ENCODE measurements at regions of chr9 and their contacts with region 1.

Region 1: GRCh38 chr9:124309665-124310064 is 51.9 kb downstream of the NEK6 start:
- DNase-seq: peak; percentile 97
- H3K4me3 ChIP-seq: no peak overlapping the region
- H3K27ac ChIP-seq: peak overlapping the region; percentile 84
- H3K4me1 ChIP-seq: peaks cover 31% of the 10 kb centered on the region
- H3K27me3 ChIP-seq: no peaks in the 10 kb centered on the region
- CTCF ChIP-seq: no peak
- POLR2A ChIP-seq: no peak

Region 2: DNA sequence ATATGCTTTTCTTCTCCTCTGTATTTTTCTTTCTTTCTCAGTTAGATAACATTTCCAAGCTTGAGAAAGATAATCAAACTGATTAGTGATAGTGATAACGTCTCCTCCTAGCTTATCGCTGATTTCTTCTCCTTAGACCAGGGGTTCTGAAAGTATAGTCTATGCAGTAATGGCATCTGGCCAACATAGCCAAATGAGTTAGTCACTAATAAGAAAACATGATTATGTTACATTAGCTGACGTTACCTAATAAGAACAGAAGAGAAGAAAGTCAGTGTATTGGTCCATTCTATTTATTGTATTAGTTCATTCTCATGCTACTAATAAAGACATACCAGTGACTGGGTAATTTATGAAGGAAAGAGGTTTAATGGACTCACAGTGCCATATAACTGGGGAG is 1152.4 kb before region 1 on chr9:
- CTCF ChIA-PET with region 1: no interaction called
- POLR2A ChIA-PET with region 1: no interaction called
- dilution Hi-C with region 1: no loop called
- intact Hi-C with region 1: no loop called
- DNase-seq: peak; percentile 51
- H3K4me3 ChIP-seq: no peak overlapping the region
- H3K27ac ChIP-seq: no peak overlapping the region
- H3K4me1 ChIP-seq: peaks cover 7% of the 10 kb centered on the region
- H3K27me3 ChIP-seq: no peaks in the 10 kb centered on the region
- CTCF ChIP-seq: no peak
- POLR2A ChIP-seq: no peak

Region 3: GRCh38 chr9:124133727-124134126 is 175.9 kb before region 1 on chr9:
- CTCF ChIA-PET with region 1: interaction called, 29 read pairs
- POLR2A ChIA-PET with region 1: no interaction called
- dilution Hi-C with region 1: no loop called
- intact Hi-C with region 1: loop called (anchors 2 kb)
- DNase-seq: peak; percentile 68
- H3K4me3 ChIP-seq: no peak overlapping the region
- H3K27ac ChIP-seq: no peak overlapping the region
- H3K4me1 ChIP-seq: peaks cover 7% of the 10 kb centered on the region
- H3K27me3 ChIP-seq: no peaks in the 10 kb centered on the region
- CTCF ChIP-seq: peak; percentile 36 to 64
- POLR2A ChIP-seq: no peak

Region 4: GRCh38 chr9:124251605-124252378 is 57.9 kb before region 1 on chr9:
- CTCF ChIA-PET with region 1: no interaction called
- POLR2A ChIA-PET with region 1: no interaction called
- dilution Hi-C with region 1: no loop called
- intact Hi-C with region 1: no loop called
- DNase-seq: peak; percentile 28
- H3K4me3 ChIP-seq: no peak overlapping the region
- H3K27ac ChIP-seq: no peak overlapping the region
- H3K4me1 ChIP-seq: peaks cover 15% of the 10 kb centered on the region
- H3K27me3 ChIP-seq: no peaks in the 10 kb centered on the region
- CTCF ChIP-seq: no peak
- POLR2A ChIP-seq: no peak

Region 5: GRCh38 chr9:124267271-124267807 is 42.3 kb before region 1 on chr9:
- CTCF ChIA-PET with region 1: no interaction called
- POLR2A ChIA-PET with region 1: no interaction called
- dilution Hi-C with region 1: no loop called
- intact Hi-C with region 1: loop called (anchors 1 kb)
- DNase-seq: peak; percentile 89
- H3K4me3 ChIP-seq: no peak overlapping the region
- H3K27ac ChIP-seq: peak overlapping the region; percentile 87
- H3K4me1 ChIP-seq: peaks cover 72% of the 10 kb centered on the region
- H3K27me3 ChIP-seq: no peaks in the 10 kb centered on the region
- CTCF ChIP-seq: peak in 1 of 2 donors; percentile 15
- POLR2A ChIP-seq: peak; percentile 79

Region 6: GRCh38 chr9:124285903-124286291 is 23.8 kb before region 1 on chr9:
- CTCF ChIA-PET with region 1: no interaction called
- POLR2A ChIA-PET with region 1: no interaction called
- dilution Hi-C with region 1: no loop called
- intact Hi-C with region 1: loop called (anchors 1 kb)
- DNase-seq: peak; percentile 90
- H3K4me3 ChIP-seq: no peak overlapping the region
- H3K27ac ChIP-seq: peak overlapping the region; percentile 89
- H3K4me1 ChIP-seq: peaks cover 59% of the 10 kb centered on the region
- H3K27me3 ChIP-seq: no peaks in the 10 kb centered on the region
- CTCF ChIP-seq: no peak
- POLR2A ChIP-seq: no peak

Region 7: DNA sequence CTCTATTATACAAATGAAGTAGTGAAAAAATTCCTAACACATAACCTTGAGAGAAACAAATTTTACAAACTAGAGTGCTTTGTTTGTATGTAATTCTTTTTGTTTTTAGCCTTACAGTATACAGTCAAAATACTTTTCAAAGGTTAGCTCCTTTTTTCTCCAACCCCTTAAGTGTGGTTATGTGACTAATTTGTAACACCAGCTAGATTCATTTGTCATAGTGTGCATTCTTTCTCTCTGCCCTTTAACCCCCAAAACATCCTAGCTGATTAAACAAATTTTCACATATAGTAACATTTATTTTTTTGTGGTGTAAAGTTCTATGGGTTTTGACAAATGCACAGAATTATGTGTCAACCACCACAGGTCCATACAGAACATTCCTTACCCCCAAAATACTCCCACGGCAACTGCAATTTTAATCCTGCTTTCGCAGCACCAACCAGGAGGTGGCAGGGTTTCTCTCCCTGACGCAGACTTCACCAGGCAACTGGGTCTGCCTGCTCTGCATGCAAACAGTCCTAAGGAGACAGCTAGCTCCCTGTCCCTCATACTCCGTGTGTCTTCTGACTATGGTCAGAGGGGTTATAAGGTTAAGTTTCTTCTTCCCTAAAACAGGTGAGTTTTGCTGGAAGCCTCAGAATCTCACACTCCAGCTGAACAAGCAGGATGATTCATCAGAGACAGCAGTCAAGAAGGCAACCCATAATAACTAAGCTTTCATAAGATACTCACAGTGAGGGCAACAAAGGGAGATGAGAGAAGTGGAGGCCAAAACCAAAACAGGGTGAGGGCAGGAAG is 242.0 kb after region 1 on chr9:
- CTCF ChIA-PET with region 1: no interaction called
- POLR2A ChIA-PET with region 1: no interaction called
- dilution Hi-C with region 1: no loop called
- intact Hi-C with region 1: no loop called
- DNase-seq: peak; percentile 59
- H3K4me3 ChIP-seq: no peak overlapping the region
- H3K27ac ChIP-seq: no peak overlapping the region
- H3K4me1 ChIP-seq: no peaks in the 10 kb centered on the region
- H3K27me3 ChIP-seq: peaks cover 11 to 13% of the 10 kb centered on the region in 2 experiments
- CTCF ChIP-seq: peak; percentile 61 to 62
- POLR2A ChIP-seq: no peak